HEK293 (cell line): ENCODE measurements at regions of chr11 and their contacts with region 1.

Region 1: DNA sequence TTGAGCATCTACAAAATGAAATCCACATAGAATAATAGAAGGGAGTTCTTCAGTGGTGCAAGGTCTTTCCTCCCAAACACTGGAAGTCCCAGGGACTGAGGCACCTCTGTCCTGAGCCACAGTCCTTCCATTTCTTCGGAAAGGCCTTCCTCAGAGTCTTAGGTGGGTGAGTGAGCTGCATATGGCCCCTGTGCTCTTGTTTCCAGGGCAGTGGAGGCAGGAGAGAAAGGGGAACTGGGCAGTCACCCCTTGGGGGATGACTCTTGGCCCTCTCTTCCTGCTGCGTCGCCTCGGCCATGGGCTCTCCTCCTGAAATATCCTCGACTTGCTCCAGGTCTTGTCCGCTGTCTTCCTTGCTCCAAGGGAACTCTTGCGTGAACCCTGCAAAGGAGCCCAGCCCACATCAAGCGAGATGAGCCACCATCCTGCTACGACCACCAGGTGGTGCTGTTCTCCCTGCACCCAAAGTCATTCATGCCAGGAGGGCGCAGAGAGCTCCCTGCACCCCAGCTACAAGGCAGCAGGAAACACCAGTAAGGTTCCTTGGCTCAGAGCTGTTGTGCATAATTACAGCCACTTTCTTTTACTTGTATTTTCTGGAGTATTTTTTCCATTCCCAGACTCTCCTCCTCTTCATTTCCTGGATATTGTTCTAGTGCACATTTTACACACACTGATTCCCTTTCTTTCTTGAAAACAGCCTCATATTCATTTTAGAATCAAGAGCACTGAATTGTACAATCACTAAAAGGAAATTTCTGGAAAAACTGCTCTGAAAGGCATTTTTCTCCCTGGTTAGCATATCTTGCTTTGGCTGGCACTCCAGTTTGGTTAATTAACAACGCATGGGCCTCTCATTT is 397.8 kb downstream of the OPCML start:
- H3K4me3 ChIP-seq: no peak overlapping the region
- H3K27ac ChIP-seq: no peak overlapping the region
- H3K4me1 ChIP-seq: no peaks in the 10 kb centered on the region
- CTCF ChIP-seq: peak; percentile 15; the same call in 1 of the 2 replicates

Region 2: GRCh38 chr11:133118563-133119268 is 15.8 kb before region 1 on chr11:
- CTCF ChIA-PET with region 1: interaction called, 11 read pairs
- POLR2A ChIA-PET with region 1: no interaction called
- H3K4me3 ChIP-seq: no peak overlapping the region
- H3K27ac ChIP-seq: no peak overlapping the region
- H3K4me1 ChIP-seq: no peaks in the 10 kb centered on the region
- CTCF ChIP-seq: no peak

Region 3: GRCh38 chr11:133149698-133150097 is 15.2 kb after region 1 on chr11:
- CTCF ChIA-PET with region 1: interaction called, 39 read pairs
- POLR2A ChIA-PET with region 1: no interaction called
- H3K4me3 ChIP-seq: no peak overlapping the region
- H3K27ac ChIP-seq: no peak overlapping the region
- H3K4me1 ChIP-seq: no peaks in the 10 kb centered on the region
- CTCF ChIP-seq: no peak

Region 4: DNA sequence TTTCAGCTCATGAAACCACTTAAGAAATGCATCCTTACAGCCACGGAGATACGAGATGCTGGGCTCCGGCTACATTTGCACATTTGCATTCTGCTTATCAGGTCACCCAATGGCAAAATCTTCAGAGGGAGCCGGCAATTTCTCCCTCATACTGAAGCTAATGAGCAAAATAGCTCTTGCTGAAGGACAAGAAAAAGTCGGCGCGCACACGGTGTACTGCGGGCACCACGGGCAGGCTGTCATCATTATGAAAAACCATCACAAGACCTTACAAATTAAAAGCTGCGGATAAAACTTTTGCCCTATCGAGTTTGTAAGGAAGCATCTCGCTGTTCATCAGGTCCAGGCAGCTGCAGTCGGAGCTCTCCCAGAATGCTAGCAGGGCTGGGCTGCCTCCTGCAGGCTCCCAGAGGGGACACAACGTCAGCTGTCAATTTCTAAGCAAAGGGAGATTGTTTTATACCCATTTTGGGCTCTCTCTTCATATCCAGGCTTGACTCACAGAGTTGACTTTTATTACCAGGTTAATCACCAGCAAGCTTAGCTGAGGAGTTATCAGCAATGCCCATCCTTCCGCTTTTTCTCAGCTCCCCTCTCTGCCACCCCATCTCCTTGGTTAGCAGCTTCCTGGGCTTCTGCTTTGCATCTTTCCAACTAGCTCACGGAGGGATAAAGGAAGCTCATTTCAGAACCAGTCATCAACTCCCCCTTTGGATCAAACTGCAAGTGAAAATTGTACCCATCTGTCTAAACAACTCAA is 22.6 kb after region 1 on chr11:
- CTCF ChIA-PET with region 1: interaction called, 39 read pairs
- POLR2A ChIA-PET with region 1: no interaction called
- H3K4me3 ChIP-seq: no peak overlapping the region
- H3K27ac ChIP-seq: no peak overlapping the region
- H3K4me1 ChIP-seq: no peaks in the 10 kb centered on the region
- CTCF ChIP-seq: no peak

Region 5: DNA sequence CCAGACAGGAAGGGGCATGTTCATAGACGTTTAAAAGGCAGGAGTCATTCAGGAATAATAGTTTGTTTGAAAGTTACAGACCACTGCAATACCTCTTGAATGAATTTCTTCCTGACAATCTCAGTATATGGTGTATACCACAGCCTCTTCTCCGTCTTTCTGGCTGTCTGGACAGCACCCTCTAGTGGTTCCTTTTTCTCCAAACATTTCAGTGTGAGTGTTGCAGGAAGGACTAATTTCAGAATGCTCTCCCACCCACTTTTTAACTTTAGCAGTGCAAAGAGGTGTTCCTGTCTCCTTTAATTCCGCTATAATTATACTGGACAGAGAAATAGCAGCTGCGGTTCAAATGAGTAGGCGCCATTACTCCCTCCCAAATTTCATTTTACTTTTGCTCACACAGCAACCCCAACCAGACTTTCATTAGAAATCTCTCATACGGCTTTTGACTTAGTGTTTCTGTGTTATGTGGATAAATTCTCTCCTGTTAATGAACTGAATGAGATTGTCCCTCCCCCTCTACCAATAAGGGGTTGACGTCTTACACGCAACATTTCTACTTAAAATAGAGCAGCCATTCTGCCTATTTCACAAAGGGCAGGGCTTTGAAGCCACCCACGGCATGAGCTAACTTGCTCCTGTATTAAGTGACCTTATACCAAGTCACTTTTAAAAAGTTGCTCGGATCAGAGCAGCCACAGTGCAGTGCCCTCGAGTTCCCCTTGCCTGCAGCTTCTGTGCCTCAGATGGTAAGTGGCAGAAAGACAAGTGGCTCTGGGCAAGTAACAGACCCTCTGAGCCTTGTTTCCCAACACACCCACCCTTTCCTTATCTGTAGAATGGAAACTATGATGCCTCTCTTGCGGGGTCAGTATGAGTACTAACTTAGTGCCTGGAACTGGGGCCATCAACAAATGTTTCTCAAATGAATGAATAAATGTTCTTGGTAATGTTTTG is 29.2 kb after region 1 on chr11:
- CTCF ChIA-PET with region 1: interaction called, 19 read pairs
- POLR2A ChIA-PET with region 1: no interaction called
- H3K4me3 ChIP-seq: no peak overlapping the region
- H3K27ac ChIP-seq: no peak overlapping the region
- H3K4me1 ChIP-seq: no peaks in the 10 kb centered on the region
- CTCF ChIP-seq: no peak

Region 6: GRCh38 chr11:133821776-133822175 is 687.2 kb after region 1 on chr11:
- CTCF ChIA-PET with region 1: interaction called, 23 read pairs
- POLR2A ChIA-PET with region 1: no interaction called
- H3K4me3 ChIP-seq: no peak overlapping the region
- H3K27ac ChIP-seq: no peak overlapping the region
- H3K4me1 ChIP-seq: no peaks in the 10 kb centered on the region
- CTCF ChIP-seq: 0 out of 2 replicates have a peak, but pooled peaks have one; percentile 26

Region 7: DNA sequence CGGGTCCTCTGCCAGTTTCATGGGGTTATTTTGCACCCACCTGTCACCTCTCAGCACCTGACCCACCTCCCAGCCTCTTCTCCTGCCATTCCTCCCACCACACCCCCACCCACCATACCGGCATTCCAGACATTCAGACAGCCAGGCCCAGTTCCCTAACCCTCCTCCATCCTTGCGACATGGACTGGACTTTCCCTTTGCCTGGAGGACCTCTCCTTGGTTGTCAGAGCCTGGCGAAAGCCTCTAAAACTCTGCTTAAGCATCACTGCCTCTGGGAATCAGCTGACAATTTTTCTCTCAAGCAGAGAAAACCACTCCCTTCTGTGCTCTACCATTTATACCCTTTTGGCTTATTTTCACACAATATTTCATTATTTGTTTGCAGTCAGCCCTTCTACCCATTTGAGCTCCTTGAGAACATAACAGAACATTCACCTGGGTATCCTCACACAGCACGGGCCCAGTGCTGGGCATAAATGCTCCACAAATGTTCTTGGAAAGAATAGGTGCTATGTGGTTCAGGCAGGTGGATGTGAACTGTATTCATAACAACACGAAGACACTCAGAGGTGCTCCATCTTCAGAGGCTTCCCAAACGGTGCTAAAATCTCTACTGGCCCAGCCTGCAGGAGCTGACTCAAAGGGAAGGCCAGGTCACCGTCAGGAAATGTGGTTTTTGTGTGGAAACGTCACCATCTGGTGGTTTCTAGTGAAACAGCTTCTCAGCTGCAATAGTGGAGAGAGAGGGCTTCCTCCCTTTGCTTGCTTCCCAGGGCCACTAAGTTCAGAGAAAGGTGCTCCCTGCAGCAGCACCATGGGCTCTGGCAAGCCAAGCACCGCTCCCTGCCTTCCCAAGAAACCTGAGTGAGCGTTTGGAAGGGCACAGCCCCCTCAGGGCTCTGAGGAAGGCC is 700.4 kb after region 1 on chr11:
- CTCF ChIA-PET with region 1: interaction called, 26 read pairs
- POLR2A ChIA-PET with region 1: no interaction called
- H3K4me3 ChIP-seq: no peak overlapping the region
- H3K27ac ChIP-seq: no peak overlapping the region
- H3K4me1 ChIP-seq: no peaks in the 10 kb centered on the region
- CTCF ChIP-seq: 0 out of 2 replicates have a peak, but pooled peaks have one; percentile 37